ENCODE measurements at regions of chr7 and their contacts with region 1.

Region 1: DNA sequence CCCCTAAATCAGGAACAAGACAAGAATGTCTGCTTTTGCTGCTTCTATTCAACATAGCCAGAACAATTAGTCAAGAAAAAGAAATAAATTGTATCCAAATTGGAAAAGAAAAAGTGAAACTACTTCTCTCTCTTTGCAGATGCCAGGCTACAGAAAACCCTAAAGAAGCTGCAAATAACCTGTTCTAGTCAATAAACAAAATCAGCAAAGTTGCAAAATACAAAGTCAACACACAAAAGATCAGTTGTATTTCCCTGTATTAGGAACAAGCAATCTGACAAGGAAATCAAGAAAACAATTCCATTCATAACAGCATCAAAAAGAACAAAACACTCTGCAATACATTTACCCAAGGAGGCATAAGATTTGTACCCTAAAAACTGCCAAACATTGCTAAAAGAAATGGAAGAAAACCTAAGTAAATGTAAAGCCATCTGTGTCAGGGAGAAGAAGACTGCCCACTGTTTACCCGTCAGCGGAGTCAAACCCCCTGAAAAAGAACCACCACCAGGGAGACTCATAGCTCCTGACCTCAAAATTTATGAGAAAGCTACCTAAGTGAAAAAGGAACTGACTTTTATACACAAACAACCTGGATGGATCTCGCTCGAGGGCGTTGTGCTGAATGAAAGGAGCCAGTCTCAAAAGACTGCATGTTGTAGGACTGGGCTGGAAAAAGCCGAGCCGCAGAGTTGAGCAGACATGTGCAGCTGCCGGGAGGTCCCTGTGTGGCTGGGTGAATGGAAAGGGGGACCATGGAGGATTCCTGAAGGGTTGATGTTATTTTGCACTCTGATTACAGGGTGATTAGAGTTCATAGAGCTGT is 263.1 kb downstream of the MAD1L1 start:
- DNase-seq: peak; percentile 23
- ATAC-seq: no peak

Region 2: DNA sequence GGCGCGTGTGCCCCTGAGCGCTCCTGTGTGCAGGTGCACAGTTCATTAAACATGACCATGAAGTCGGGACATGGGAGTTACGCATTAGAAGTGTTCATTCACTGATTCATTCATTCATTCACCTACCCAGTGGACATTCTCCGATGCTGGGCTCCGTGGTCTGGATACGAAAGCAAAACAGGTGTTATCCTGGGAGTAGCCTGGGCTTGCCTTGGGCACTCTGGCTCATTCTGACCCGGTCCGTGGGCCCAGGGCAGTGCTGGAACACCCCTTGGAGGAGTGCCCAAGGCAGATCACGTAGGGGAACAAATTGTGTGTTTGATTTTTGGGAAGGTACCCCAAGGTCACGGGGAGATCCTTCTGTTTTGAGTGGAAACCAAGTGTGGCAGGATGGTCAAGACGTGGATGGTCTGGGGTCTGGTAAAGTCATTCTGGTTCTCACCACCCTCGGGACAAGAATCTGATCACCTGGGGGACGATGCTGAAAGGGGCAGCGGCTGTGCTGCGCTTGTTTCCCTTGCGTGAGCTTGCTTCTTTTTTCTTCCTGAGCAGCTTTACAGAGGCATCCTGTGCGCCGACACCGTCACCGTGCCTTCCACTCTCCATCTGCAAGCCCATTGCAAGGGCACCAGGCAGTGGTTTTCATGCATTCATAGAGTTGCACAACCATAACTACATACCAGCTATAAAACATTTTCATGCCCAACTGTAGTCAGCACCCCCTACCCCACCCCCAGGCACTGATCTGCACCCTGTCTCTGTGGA is 289.5 kb before region 1 on chr7:
- intact Hi-C with region 1: no loop called
- DNase-seq: no peak
- ATAC-seq: no peak

Region 3: GRCh38 chr7:1899196-1899595 is 70.5 kb before region 1 on chr7:
- intact Hi-C with region 1: no loop called
- DNase-seq: peak; percentile 70
- ATAC-seq: peak; percentile 50

Region 4: GRCh38 chr7:2009541-2010001 is 39.9 kb after region 1 on chr7:
- intact Hi-C with region 1: loop called (anchors 5 kb)
- DNase-seq: peak; percentile 85
- ATAC-seq: peak; percentile 79

Region 5: DNA sequence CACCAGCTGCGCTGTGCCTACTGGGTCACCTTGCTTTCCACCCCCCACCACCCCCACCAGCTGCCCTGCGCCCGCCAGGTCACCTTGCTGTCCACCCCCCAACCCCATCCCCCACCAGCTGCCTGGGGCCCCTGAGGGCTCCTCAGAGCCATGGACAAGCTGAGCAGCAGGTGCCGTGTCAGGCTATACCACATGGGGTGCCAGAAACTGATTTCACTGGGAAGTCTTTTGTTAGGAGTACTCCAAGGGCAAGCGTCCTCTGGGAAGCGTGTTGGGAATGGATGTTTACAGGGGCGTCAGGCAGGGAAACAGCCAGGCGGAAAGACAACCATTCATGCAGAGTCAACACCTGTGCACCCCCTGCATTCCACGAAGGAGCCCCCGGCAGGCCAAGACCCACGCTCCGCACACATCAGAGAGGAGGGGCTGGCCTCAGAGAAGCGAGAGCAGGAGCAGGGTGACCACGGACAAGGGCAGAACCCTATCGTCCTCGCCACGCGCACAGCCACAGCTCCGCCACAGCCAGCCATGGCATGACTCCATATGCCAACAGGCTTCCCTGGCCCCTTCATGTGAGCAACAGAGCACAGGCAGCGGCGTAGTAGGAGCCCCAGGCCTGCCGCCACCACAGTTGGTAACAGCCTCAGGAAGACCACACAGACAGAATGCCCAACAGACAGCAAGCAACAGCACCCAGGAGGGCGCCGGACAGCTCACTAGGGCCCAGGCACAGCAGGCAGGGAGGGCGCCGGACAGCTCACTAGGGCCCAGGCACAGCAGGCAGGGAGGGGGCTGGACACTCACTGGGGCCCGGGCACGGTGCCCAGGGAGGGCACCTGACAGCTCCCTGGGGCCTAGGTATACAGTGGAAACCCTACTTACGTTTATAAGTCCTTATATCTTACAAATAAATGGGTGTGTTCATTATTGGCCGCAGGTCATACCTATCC is 82.3 kb after region 1 on chr7:
- intact Hi-C with region 1: loop called (anchors 1 kb)
- DNase-seq: peak; percentile 52
- ATAC-seq: peak; percentile 30